Transverse colon (tissue), 4 donors: ENCODE measurements at regions of chr12 and their contacts with region 1.

Region 1: GRCh38 chr12:9039397-9039977 is 50.1 kb downstream of the KLRG1 start:
- DNase-seq: no peak
- H3K4me3 ChIP-seq: no peak overlapping the region
- H3K27ac ChIP-seq: no peak overlapping the region
- H3K4me1 ChIP-seq: no peaks in the 10 kb centered on the region
- H3K27me3 ChIP-seq: no peaks in the 10 kb centered on the region
- CTCF ChIP-seq: peak; percentile 59 to 69 (median 67)
- EP300 ChIP-seq: no peak
- POLR2A ChIP-seq: no peak

Region 2: DNA sequence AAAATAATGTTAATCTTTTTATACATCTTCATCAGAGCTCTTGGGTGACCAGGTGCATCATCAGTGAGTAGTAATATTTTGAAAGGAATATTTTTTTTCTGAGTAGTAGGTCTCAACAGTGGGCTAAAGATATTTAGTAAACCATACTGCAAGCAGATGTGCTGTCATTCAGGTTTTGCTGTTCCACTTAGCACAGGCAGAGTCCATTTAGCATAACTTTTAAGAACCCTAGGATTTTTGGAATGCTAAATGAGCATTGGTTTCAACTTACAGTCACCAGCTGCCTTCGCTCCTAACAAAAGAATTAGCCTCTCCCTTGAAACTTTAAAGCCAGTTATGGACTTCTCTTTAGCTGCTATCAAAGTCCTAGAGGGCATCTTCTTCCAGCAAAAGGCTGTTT is 317.2 kb before region 1 on chr12:
- in situ Hi-C with region 1: no loop called
- intact Hi-C with region 1: no loop called
- DNase-seq: no peak
- H3K4me3 ChIP-seq: no peak overlapping the region
- H3K27ac ChIP-seq: no peak overlapping the region
- H3K4me1 ChIP-seq: no peaks in the 10 kb centered on the region
- H3K27me3 ChIP-seq: no peaks in the 10 kb centered on the region
- CTCF ChIP-seq: no peak
- EP300 ChIP-seq: no peak
- POLR2A ChIP-seq: no peak

Region 3: DNA sequence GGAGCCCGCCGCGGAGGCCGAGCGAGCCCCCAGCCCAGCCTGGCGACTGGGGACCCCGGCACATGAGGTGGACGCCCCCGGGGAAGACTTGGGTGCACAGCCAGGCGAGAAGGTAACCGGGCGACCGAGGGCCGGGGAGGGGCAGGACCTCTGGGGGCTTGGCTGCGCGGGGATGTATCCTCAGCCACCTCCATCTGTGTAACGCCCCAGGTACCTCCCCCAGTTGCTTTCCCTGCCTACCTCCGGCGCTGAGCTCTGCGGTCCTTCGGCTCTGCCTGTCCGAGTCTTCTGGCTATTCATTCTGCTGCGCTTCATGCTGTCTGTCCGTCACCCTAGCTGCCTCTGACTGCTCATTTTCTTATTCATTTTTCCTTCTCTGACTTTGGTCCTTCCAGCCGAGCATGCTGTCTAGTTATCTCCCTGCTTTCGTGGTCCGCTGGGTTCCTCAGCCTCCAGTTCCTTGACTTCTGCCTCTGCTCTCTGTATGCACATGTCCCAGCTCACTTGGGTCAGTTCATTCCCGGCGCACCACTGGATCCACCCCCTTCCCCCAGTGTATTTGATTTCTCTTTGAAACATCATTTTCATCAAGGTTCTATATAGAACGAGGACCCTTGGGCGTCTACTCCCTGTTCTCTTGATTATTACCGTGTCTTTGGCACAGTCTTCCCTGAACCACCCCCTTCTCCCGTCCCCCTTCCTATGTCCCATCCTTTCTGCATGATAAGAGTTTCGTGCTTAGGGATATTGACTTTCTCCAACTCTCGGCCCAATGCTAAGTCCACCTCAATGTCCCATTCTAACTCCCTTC is 124.6 kb before region 1 on chr12:
- in situ Hi-C with region 1: no loop called
- intact Hi-C with region 1: no loop called
- DNase-seq: peak; percentile 62
- H3K4me3 ChIP-seq: peak overlapping the region; percentile 29 to 96 (median 74)
- H3K27ac ChIP-seq: peak overlapping the region; percentile 86 to 93 (median 90)
- H3K4me1 ChIP-seq: peaks cover 6 to 30% (median 17%) of the 10 kb centered on the region in 4 donors
- H3K27me3 ChIP-seq: no peaks in the 10 kb centered on the region
- CTCF ChIP-seq: no peak
- EP300 ChIP-seq: no peak
- POLR2A ChIP-seq: no peak

Region 4: GRCh38 chr12:8949342-8950220 is 89.9 kb before region 1 on chr12 and contains the start of gene M6PR:
- in situ Hi-C with region 1: no loop called
- intact Hi-C with region 1: loop called (anchors 10 kb)
- DNase-seq: peak; percentile 94
- H3K4me3 ChIP-seq: peak within 1 kb of the TSS; percentile 55 to 97 (median 78)
- H3K27ac ChIP-seq: peak within 1 kb of the TSS; percentile 94 to 98 (median 96)
- H3K4me1 ChIP-seq: peaks cover 7 to 35% (median 16%) of the 10 kb centered on the region in 4 donors
- H3K27me3 ChIP-seq: no peaks in the 10 kb centered on the region
- CTCF ChIP-seq: peak; percentile 27 to 49 (median 38)
- EP300 ChIP-seq: no peak
- POLR2A ChIP-seq: peak; percentile 85
- total RNA-seq, gene M6PR: 43.2 to 87.5 (median 67.2) TPM